ENCODE measurements at regions of chr3 and their contacts with region 1.

Region 1: GRCh38 chr3:56988458-56989168 is 71.9 kb upstream of the SPATA12 start:
- DNase-seq: peak; percentile 84
- ATAC-seq: peak; percentile 72
- H3K4me3 Mint-ChIP-seq: no peak overlapping the region
- H3K27ac Mint-ChIP-seq: no peak overlapping the region
- H3K4me1 Mint-ChIP-seq: peaks cover 23% of the 10 kb centered on the region
- H3K27me3 Mint-ChIP-seq: peaks cover 12% of the 10 kb centered on the region

Region 2: GRCh38 chr3:56347219-56347871 is 641.3 kb before region 1 on chr3:
- CTCF ChIA-PET with region 1: no interaction called
- POLR2A ChIA-PET with region 1: no interaction called
- intact Hi-C with region 1: loop called in 1 of 2 experiments (anchors 5 kb)
- DNase-seq: peak; percentile 71
- ATAC-seq: peak; percentile 47
- H3K4me3 Mint-ChIP-seq: no peak overlapping the region
- H3K27ac Mint-ChIP-seq: no peak overlapping the region
- H3K4me1 Mint-ChIP-seq: no peaks in the 10 kb centered on the region
- H3K27me3 Mint-ChIP-seq: peaks cover 8% of the 10 kb centered on the region

Region 3: GRCh38 chr3:56702490-56703315 is 285.9 kb before region 1 on chr3:
- CTCF ChIA-PET with region 1: interaction called, 181 read pairs
- POLR2A ChIA-PET with region 1: interaction called, 7 read pairs
- intact Hi-C with region 1: loop called (anchors 1 kb)
- DNase-seq: peak; percentile 60
- ATAC-seq: peak; percentile 64
- H3K4me3 Mint-ChIP-seq: no peak overlapping the region
- H3K27ac Mint-ChIP-seq: no peak overlapping the region
- H3K4me1 Mint-ChIP-seq: peaks cover 21% of the 10 kb centered on the region
- H3K27me3 Mint-ChIP-seq: no peaks in the 10 kb centered on the region

Region 4: DNA sequence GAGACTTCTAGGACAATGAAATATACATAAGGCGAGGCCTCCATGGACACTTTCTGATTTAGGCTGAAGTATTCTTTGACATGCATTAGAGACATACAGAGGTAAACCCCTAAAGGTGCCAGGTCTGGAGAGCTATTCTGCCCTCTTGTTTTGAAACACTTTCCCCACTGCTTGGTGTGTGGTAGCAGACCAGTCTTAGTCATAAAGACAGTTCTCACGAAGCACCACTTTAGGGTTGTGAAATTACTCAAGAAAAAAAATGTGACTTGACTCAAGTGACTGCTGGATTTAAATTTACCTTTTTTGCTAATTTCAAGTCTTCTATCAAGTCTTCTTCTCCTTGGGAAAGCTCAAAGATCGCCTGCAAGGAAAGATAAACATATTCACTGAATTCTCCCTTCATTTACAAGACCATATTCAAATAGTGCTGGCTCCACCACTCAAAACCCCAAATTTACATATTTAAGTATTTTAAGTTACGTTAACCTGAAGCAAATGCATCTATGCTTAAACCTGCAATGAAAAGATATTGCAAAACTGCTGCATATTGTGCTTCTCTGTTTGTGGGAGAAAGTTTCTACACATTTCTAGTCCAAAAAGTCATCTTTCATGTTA is 235.3 kb before region 1 on chr3:
- CTCF ChIA-PET with region 1: interaction called, 19 read pairs
- POLR2A ChIA-PET with region 1: no interaction called
- intact Hi-C with region 1: no loop called
- DNase-seq: peak; percentile 66
- ATAC-seq: peak; percentile 98
- H3K4me3 Mint-ChIP-seq: peak overlapping the region; percentile 21
- H3K27ac Mint-ChIP-seq: peak overlapping the region; percentile 70
- H3K4me1 Mint-ChIP-seq: peaks cover 59% of the 10 kb centered on the region
- H3K27me3 Mint-ChIP-seq: no peaks in the 10 kb centered on the region

Region 5: GRCh38 chr3:56837196-56837955 is 151.2 kb before region 1 on chr3:
- CTCF ChIA-PET with region 1: interaction called, 11 read pairs
- POLR2A ChIA-PET with region 1: no interaction called
- intact Hi-C with region 1: no loop called
- DNase-seq: peak; percentile 23
- ATAC-seq: peak; percentile 66
- H3K4me3 Mint-ChIP-seq: no peak overlapping the region
- H3K27ac Mint-ChIP-seq: no peak overlapping the region
- H3K4me1 Mint-ChIP-seq: peaks cover 28% of the 10 kb centered on the region
- H3K27me3 Mint-ChIP-seq: no peaks in the 10 kb centered on the region

Region 6: DNA sequence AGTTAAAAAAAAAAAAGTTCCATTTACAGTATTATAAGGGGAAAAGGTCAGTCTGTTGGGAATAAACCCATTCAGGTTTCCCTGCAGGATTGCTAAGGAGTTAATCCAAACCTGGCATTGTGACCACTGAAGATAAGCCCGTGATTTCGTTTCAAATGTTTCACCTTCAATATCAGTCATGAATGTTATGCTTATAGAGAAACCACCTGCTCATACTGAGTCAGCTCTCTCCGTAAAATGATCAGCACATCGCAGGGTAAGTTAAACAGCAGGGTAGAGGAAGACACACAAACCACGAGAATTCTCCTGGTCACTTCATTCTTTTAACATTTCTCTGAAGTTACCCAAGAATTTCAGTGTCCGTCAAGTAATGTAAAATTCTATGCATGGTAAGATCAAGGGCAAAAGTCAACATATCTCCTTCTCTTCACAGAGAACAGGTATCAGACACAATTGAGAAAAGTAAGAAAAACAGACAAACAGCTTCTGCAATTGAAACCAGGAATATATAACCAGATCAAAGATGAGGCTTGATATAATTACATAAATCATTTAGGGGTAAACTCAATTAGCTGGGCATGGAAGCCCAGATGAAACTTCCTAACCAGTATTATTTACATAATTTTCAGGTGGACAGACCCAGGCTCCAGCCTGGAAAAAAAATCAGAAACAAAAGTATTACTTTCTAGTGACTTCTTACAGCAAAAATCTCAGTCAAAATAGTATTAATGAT is 119.3 kb before region 1 on chr3:
- CTCF ChIA-PET with region 1: interaction called, 6 read pairs
- POLR2A ChIA-PET with region 1: interaction called, 18 read pairs
- intact Hi-C with region 1: no loop called
- DNase-seq: peak; percentile 35
- ATAC-seq: peak; percentile 87
- H3K4me3 Mint-ChIP-seq: peak overlapping the region; percentile 52
- H3K27ac Mint-ChIP-seq: peak overlapping the region; percentile 81
- H3K4me1 Mint-ChIP-seq: peaks cover 72% of the 10 kb centered on the region
- H3K27me3 Mint-ChIP-seq: no peaks in the 10 kb centered on the region

Region 7: DNA sequence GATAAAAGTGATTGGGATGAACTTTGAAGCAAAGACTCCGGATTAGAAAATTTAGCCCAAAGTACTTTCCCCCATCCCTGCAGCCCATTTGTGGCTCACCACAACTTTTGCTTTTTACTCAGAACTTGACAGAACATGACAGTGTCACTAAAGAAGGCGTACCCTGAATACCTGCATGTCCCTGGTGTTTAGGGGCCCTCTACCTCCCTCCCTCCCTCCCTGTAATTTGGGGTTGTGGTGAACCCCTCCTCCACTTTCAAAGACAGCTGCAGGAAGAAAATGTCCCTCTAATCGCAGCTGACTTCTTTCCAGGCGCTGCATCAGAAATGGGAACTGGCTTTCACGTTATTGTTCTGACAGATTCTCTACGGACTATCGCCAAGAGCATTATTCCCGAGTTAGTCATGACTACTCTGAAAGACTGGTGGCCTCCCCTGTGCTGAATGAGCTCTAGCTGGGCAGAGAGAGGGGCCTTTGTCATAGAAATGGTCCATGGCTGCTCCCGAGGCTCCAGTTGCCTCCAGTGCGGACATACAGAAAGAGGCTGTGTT is 93.7 kb before region 1 on chr3:
- CTCF ChIA-PET with region 1: interaction called, 9 read pairs
- POLR2A ChIA-PET with region 1: interaction called, 10 read pairs
- intact Hi-C with region 1: no loop called
- DNase-seq: peak; percentile 60
- ATAC-seq: peak; percentile 72
- H3K4me3 Mint-ChIP-seq: peak overlapping the region; percentile 29
- H3K27ac Mint-ChIP-seq: no peak overlapping the region
- H3K4me1 Mint-ChIP-seq: peaks cover 66% of the 10 kb centered on the region
- H3K27me3 Mint-ChIP-seq: no peaks in the 10 kb centered on the region